Endothelial cell of umbilical vein (primary cell): ENCODE measurements at regions of chr19 and their contacts with region 1.

Region 1: GRCh38 chr19:9075064-9075949 is 11.6 kb upstream of the OR1M1 start:
- DNase-seq: peak; percentile 94
- H3K4me3 ChIP-seq: no peak overlapping the region
- H3K27ac ChIP-seq: peak overlapping the region; percentile 29
- H3K4me1 ChIP-seq: peaks cover 5% of the 10 kb centered on the region
- H3K27me3 ChIP-seq: no peaks in the 10 kb centered on the region
- CTCF ChIP-seq: no peak
- POLR2A ChIP-seq: no peak

Region 2: GRCh38 chr19:9128171-9128570 is 52.9 kb after region 1 on chr19:
- CTCF ChIA-PET with region 1: no interaction called
- POLR2A ChIA-PET with region 1: no interaction called
- dilution Hi-C with region 1: no loop called
- intact Hi-C with region 1: loop called (anchors 1 kb)
- DNase-seq: peak; percentile 96
- H3K4me3 ChIP-seq: no peak overlapping the region
- H3K27ac ChIP-seq: peak overlapping the region; percentile 76
- H3K4me1 ChIP-seq: peaks cover 5% of the 10 kb centered on the region
- H3K27me3 ChIP-seq: no peaks in the 10 kb centered on the region
- CTCF ChIP-seq: no peak
- POLR2A ChIP-seq: peak; percentile 29